B cell (primary cell): ENCODE measurements at regions of chr14 and their contacts with region 1.

Region 1: DNA sequence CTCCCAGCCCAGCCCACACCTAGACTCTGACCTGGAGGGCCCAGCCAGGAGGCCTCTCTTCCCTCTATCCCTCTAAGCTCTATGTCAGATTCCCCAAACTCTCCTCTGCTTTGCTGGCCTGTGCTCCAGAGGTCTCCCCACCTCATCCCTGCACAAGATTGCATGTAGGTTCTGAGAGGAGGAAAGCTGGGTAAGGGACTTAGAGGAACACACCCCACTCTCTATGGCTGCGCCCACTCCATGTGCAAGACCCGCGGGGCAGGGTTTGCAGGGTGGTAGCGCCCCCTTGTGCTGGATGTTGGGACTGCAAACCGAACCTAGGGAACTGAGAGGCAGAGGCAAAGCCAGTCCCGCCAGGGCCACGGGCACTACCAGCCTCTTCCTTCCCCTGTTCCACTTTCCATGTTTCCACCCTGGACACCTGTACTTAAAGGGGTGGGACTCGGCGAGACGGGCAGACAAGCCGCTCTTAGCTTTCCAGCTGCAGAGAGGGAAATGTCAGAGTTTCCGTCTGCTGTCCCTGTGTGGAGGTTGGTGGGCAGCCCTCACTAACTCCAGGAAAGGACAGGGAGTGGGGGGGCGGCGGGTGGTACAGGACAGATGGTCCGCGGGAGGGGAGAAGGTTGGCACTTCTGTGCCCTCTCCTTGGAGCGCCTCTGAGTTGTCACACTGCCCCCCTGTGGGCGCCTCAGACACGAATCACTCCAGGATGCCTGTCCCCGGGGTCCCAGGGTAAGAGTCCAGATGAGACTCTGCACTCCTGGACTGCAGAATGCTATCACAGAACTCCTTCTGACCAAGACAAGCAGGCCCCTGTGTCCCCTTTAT is 16.8 kb downstream of the MMP14 start:
- DNase-seq: peak; percentile 91
- ATAC-seq: peak; percentile 95
- H3K4me3 ChIP-seq: peak overlapping the region; percentile 49 to 72 (median 63)
- H3K4me3 Mint-ChIP-seq: peak overlapping the region; percentile 88
- H3K27ac ChIP-seq: peak overlapping the region in 1 of 2 donors; percentile 42
- H3K27ac Mint-ChIP-seq: peak overlapping the region; percentile 85
- H3K4me1 ChIP-seq: peaks cover 0 to 8% of the 10 kb centered on the region in 2 donors
- H3K4me1 Mint-ChIP-seq: peaks cover 6% of the 10 kb centered on the region
- H3K27me3 ChIP-seq: peaks cover 0 to 5% (median 0%) of the 10 kb centered on the region in 4 experiments
- H3K27me3 Mint-ChIP-seq: peaks cover 6% of the 10 kb centered on the region
- CTCF ChIP-seq: peak; percentile 87

Region 2: GRCh38 chr14:22386924-22387775 is 466.0 kb before region 1 on chr14:
- CTCF ChIA-PET with region 1: interaction called, 22 read pairs
- POLR2A ChIA-PET with region 1: no interaction called
- intact Hi-C with region 1: loop called (anchors 1 kb)
- DNase-seq: peak; percentile 91
- ATAC-seq: peak; percentile 34
- H3K4me3 ChIP-seq: no peak overlapping the region
- H3K4me3 Mint-ChIP-seq: peak overlapping the region; percentile 69
- H3K27ac ChIP-seq: no peak overlapping the region
- H3K27ac Mint-ChIP-seq: peak overlapping the region; percentile 12
- H3K4me1 ChIP-seq: peaks cover 38 to 49% of the 10 kb centered on the region in 2 donors
- H3K4me1 Mint-ChIP-seq: peaks cover 82% of the 10 kb centered on the region
- H3K27me3 ChIP-seq: no peaks in the 10 kb centered on the region
- H3K27me3 Mint-ChIP-seq: no peaks in the 10 kb centered on the region
- CTCF ChIP-seq: peak; percentile 83

Region 3: GRCh38 chr14:22598099-22598899 is 254.9 kb before region 1 on chr14 and contains the start of gene ABHD4:
- CTCF ChIA-PET with region 1: interaction called, 5 read pairs
- POLR2A ChIA-PET with region 1: no interaction called
- intact Hi-C with region 1: loop called (anchors 5 kb)
- DNase-seq: peak; percentile 79
- ATAC-seq: peak; percentile 96
- H3K4me3 ChIP-seq: peak within 1 kb of the TSS; percentile 90 to 97 (median 92)
- H3K4me3 Mint-ChIP-seq: peak within 1 kb of the TSS; percentile 98
- H3K27ac ChIP-seq: peak within 1 kb of the TSS; percentile 46 to 76
- H3K27ac Mint-ChIP-seq: peak within 1 kb of the TSS; percentile 96
- H3K4me1 ChIP-seq: peaks cover 15 to 22% of the 10 kb centered on the region in 2 donors
- H3K4me1 Mint-ChIP-seq: peaks cover 28% of the 10 kb centered on the region
- H3K27me3 ChIP-seq: no peaks in the 10 kb centered on the region
- H3K27me3 Mint-ChIP-seq: peaks cover 3% of the 10 kb centered on the region
- CTCF ChIP-seq: peak; percentile 6
- total RNA-seq, gene ABHD4: 21.8 and 22.7 TPM in 2 replicates

Region 4: GRCh38 chr14:22721213-22721612 is 131.9 kb before region 1 on chr14:
- CTCF ChIA-PET with region 1: no interaction called
- POLR2A ChIA-PET with region 1: no interaction called
- intact Hi-C with region 1: no loop called
- DNase-seq: no peak
- ATAC-seq: no peak
- H3K4me3 ChIP-seq: no peak overlapping the region
- H3K4me3 Mint-ChIP-seq: no peak overlapping the region
- H3K27ac ChIP-seq: no peak overlapping the region
- H3K27ac Mint-ChIP-seq: no peak overlapping the region
- H3K4me1 ChIP-seq: no peaks in the 10 kb centered on the region
- H3K4me1 Mint-ChIP-seq: no peaks in the 10 kb centered on the region
- H3K27me3 ChIP-seq: peaks cover 0 to 3% (median 0%) of the 10 kb centered on the region in 4 experiments
- H3K27me3 Mint-ChIP-seq: peaks cover 9% of the 10 kb centered on the region
- CTCF ChIP-seq: no peak

Region 5: DNA sequence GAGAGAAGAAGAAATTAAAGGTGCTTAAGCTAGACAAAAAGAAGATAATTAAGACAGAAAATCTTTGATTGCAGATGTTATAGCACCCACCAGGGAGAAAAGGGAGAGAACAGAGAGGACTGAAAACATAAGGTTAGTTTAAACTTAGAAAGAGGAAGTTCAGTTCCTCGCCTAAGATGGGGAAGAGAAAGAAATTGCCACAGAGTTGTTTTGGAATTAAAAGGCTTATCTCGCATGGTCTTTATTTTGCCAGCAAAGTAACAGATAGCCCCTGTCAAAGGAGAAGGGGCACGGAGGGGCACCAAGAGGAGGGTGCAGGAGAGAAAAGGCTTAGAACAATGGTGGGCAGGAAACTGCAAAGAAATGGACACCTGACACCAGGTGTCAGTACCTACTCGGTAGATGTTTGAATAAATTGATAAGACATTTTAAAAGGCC is 104.5 kb before region 1 on chr14:
- CTCF ChIA-PET with region 1: interaction called, 95 read pairs
- POLR2A ChIA-PET with region 1: interaction called, 4 read pairs
- intact Hi-C with region 1: loop called (anchors 1 kb)
- DNase-seq: peak; percentile 71
- ATAC-seq: peak; percentile 80
- H3K4me3 ChIP-seq: peak overlapping the region in 4 of 5 experiments; percentile 8 to 58 (median 32)
- H3K4me3 Mint-ChIP-seq: peak overlapping the region; percentile 80
- H3K27ac ChIP-seq: peak overlapping the region; percentile 70 to 75
- H3K27ac Mint-ChIP-seq: peak overlapping the region; percentile 99
- H3K4me1 ChIP-seq: peaks cover 15 to 17% of the 10 kb centered on the region in 2 donors
- H3K4me1 Mint-ChIP-seq: peaks cover 20% of the 10 kb centered on the region
- H3K27me3 ChIP-seq: no peaks in the 10 kb centered on the region
- H3K27me3 Mint-ChIP-seq: no peaks in the 10 kb centered on the region
- CTCF ChIP-seq: peak; percentile 49

Region 6: DNA sequence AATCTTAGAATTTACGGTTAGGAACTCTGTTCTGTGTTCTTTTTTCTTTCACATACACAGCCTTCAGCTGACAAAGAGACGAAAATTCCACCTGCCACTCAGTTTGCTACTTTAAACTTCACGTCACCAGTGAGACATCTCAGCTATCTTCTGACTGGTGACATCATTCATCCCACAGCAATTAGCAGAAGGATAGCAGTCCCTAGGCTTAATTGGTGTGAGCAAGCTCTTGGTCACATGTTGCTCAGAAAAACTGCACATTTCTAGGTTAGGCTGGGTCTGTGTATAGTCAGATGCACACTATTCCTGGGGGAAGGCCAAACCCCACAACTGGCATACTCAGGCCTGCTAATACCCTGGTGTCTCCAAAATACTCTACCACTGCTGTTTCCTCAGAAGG is 61.9 kb before region 1 on chr14:
- CTCF ChIA-PET with region 1: interaction called, 17 read pairs
- POLR2A ChIA-PET with region 1: interaction called, 5 read pairs
- intact Hi-C with region 1: no loop called
- DNase-seq: peak; percentile 31
- ATAC-seq: no peak
- H3K4me3 ChIP-seq: no peak overlapping the region
- H3K4me3 Mint-ChIP-seq: peak overlapping the region; percentile 43
- H3K27ac ChIP-seq: peak overlapping the region; percentile 75 to 84
- H3K27ac Mint-ChIP-seq: peak overlapping the region; percentile 78
- H3K4me1 ChIP-seq: peaks cover 43 to 51% of the 10 kb centered on the region in 2 donors
- H3K4me1 Mint-ChIP-seq: peaks cover 59% of the 10 kb centered on the region
- H3K27me3 ChIP-seq: no peaks in the 10 kb centered on the region
- H3K27me3 Mint-ChIP-seq: no peaks in the 10 kb centered on the region
- CTCF ChIP-seq: no peak

Region 7: DNA sequence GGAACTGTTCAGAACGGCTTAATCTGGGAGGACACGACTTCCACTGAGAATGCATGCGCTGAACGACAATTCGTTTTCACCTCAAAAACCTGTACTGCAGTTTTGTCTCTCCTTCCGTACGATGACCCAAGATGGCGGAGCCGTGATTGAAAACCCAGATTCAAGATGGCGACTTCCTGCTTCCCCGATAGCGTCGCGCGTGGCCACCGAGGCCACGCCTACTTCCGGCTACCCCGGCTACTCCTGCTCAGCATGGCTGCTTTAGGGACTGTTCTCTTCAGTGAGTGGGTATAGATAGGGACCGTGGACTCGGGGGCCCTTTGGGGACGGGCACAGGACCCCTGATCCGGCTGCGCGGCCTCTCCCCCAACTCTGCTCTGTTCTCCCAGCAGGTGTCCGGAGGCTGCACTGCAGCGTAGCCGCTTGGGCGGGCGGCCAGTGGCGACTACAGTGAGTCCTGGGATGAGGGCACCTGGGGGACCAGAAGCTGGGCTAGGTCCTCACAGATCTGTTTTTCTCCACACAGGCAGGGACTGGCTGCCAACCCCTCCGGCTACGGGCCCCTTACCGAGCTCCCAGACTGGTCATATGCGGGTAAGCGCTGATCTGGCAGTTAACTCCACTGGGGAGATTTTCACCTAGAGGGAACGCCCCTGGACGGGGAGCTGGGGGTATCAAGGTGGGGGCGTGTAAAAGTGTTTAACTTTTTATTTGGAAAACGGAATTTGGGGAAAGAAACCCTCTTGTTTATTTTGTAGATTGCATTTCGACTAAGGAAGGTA is 23.3 kb before region 1 on chr14 and contains the start of gene MRPL52:
- CTCF ChIA-PET with region 1: interaction called, 207 read pairs
- POLR2A ChIA-PET with region 1: no interaction called
- intact Hi-C with region 1: no loop called
- DNase-seq: peak; percentile 95
- ATAC-seq: peak; percentile 94
- H3K4me3 ChIP-seq: peak within 1 kb of the TSS; percentile 68 to 92 (median 84)
- H3K4me3 Mint-ChIP-seq: peak within 1 kb of the TSS; percentile 84
- H3K27ac ChIP-seq: peak within 1 kb of the TSS; percentile 87 to 91
- H3K27ac Mint-ChIP-seq: peak within 1 kb of the TSS; percentile 93
- H3K4me1 ChIP-seq: peaks cover 18 to 22% of the 10 kb centered on the region in 2 donors
- H3K4me1 Mint-ChIP-seq: peaks cover 30% of the 10 kb centered on the region
- H3K27me3 ChIP-seq: no peaks in the 10 kb centered on the region
- H3K27me3 Mint-ChIP-seq: no peaks in the 10 kb centered on the region
- CTCF ChIP-seq: no peak
- total RNA-seq, gene MRPL52: 91.6 and 93.0 TPM in 2 replicates

Region 8: DNA sequence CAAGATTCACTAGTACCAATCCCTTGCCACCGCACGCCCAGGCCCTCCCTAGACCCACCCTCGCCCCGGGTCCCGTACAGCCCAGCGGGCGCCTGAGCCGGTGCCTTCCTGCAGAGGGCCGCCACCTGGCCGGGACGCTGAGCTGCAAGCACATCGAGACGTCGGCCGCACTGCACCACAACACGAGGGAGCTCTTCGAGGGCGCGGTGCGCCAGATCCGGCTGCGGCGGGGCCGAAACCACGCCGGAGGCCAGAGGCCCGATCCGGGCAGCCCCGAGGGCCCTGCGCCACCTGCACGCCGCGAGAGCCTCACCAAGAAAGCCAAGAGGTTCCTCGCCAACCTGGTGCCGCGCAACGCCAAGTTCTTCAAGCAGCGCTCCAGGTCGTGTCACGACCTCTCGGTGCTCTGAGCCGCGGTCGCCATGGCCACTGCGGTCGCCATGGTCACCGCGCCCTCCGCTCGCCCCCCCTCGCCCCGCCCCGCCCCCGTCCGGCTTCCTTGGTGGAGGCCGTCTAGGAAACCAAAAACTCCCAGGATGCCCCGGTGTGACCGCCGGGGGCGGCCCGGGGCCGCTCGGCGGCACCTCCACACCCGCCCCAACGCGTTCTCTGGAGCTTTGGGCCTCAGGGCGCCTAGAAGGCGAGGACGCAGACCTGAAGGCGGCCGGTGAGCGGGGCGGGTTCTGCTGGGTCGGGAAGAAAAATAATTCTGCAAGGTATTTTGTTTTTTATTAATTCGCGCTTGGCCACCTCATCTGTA is 33.5 kb after region 1 on chr14:
- CTCF ChIA-PET with region 1: interaction called, 15 read pairs
- POLR2A ChIA-PET with region 1: no interaction called
- intact Hi-C with region 1: no loop called
- DNase-seq: peak; percentile 89
- ATAC-seq: peak; percentile 62
- H3K4me3 ChIP-seq: peak overlapping the region; percentile 44 to 83 (median 67)
- H3K4me3 Mint-ChIP-seq: peak overlapping the region; percentile 97
- H3K27ac ChIP-seq: peak overlapping the region; percentile 85 to 94
- H3K27ac Mint-ChIP-seq: peak overlapping the region; percentile 99
- H3K4me1 ChIP-seq: peaks cover 55 to 83% of the 10 kb centered on the region in 2 donors
- H3K4me1 Mint-ChIP-seq: peaks cover 71% of the 10 kb centered on the region
- H3K27me3 ChIP-seq: no peaks in the 10 kb centered on the region
- H3K27me3 Mint-ChIP-seq: no peaks in the 10 kb centered on the region
- CTCF ChIP-seq: peak; percentile 42

Region 9: GRCh38 chr14:23352511-23353432 is 499.6 kb after region 1 on chr14 and contains the start of gene SLC22A17:
- CTCF ChIA-PET with region 1: no interaction called
- POLR2A ChIA-PET with region 1: no interaction called
- intact Hi-C with region 1: no loop called
- DNase-seq: peak; percentile 60
- ATAC-seq: peak; percentile 75
- H3K4me3 ChIP-seq: peak within 1 kb of the TSS in 4 of 5 experiments; percentile 15 to 52 (median 44)
- H3K4me3 Mint-ChIP-seq: peak within 1 kb of the TSS; percentile 85
- H3K27ac ChIP-seq: no peak within 1 kb of the TSS
- H3K27ac Mint-ChIP-seq: no peak within 1 kb of the TSS
- H3K4me1 ChIP-seq: peaks cover 11 to 15% of the 10 kb centered on the region in 2 donors
- H3K4me1 Mint-ChIP-seq: peaks cover 14% of the 10 kb centered on the region
- H3K27me3 ChIP-seq: peaks cover 0 to 57% (median 28%) of the 10 kb centered on the region in 4 experiments
- H3K27me3 Mint-ChIP-seq: peaks cover 59% of the 10 kb centered on the region
- CTCF ChIP-seq: no peak
- total RNA-seq, gene SLC22A17: 0.89 and 0.97 TPM in 2 replicates